Activated T-helper 1 cell treated with anti-CD3 and anti-CD28 coated beads, Interleukin-12 subunit alpha, Interleukin-12 subunit beta, Interleukin-2, Interleukin-4 antibody, amounts not matched to agents 30 ng/mL and 10 ng/mL and 1 ng/mL, durations not matched to agents 14 hours and 24 hours and 36 hours (primary cell): ENCODE measurements at regions of chr10 and their contacts with region 1.

Region 1: GRCh38 chr10:74557098-74557497 is 269.3 kb upstream of the KAT6B start:
- DNase-seq: no peak
- H3K4me3 Mint-ChIP-seq: no peak overlapping the region
- H3K27ac Mint-ChIP-seq: no peak overlapping the region
- H3K4me1 Mint-ChIP-seq: peaks cover 5% of the 10 kb centered on the region
- H3K27me3 Mint-ChIP-seq: no peaks in the 10 kb centered on the region

Region 2: GRCh38 chr10:74518061-74518460 is 39.0 kb before region 1 on chr10:
- intact Hi-C with region 1: loop called (anchors 1 kb)
- DNase-seq: no peak
- H3K4me3 Mint-ChIP-seq: no peak overlapping the region
- H3K27ac Mint-ChIP-seq: no peak overlapping the region
- H3K4me1 Mint-ChIP-seq: no peaks in the 10 kb centered on the region
- H3K27me3 Mint-ChIP-seq: no peaks in the 10 kb centered on the region

Region 3: GRCh38 chr10:74575191-74575720 is 18.2 kb after region 1 on chr10:
- intact Hi-C with region 1: no loop called
- DNase-seq: no peak
- H3K4me3 Mint-ChIP-seq: no peak overlapping the region
- H3K27ac Mint-ChIP-seq: no peak overlapping the region
- H3K4me1 Mint-ChIP-seq: peaks cover 9% of the 10 kb centered on the region
- H3K27me3 Mint-ChIP-seq: no peaks in the 10 kb centered on the region